AG04450 (cell line): ENCODE measurements at regions of chr19 and their contacts with region 1.

Region 1: DNA sequence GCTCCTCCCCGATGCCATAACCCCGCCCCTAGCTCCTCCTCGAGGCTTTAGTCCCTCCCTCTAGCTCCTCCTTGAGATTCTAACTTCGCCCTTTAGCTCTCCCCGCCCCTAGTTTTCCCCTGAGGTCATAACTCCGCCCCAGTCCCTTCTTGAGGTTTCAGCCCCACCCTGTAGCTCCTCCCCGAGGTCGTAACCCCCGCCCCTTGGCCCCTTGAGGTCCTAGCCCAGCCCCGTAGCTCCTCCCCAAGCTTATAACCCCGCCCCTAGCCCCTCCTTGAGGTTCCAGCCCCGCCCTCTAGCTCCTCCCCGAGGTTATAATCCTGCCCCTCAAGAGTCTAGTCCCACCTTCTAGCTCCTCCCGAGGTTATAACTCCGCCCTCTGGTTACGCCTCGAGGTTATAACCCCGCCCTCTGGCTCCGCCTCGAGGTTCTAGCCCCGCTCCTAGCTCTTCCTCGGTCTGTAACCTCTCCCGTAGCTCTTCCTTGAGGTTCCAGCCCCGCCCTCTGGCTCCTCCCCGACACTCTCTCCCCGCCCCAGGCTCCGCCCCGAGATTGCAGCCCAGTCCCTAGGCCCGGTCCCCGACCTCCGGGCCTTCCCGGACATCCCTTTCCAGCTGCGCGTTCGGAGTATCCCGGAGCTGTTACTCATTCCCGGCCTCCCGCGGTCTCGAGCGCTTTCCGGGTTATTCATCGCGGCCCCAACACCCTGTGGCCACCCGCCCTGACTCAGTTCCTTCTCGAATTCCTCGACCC is 1.4 kb downstream of the PLAUR start:
- DNase-seq: peak; percentile 100
- H3K4me3 ChIP-seq: peak overlapping the region; percentile 94
- H3K27ac ChIP-seq: peak overlapping the region; percentile 98
- H3K27me3 ChIP-seq: no peaks in the 10 kb centered on the region
- CTCF ChIP-seq: no peak

Region 2: DNA sequence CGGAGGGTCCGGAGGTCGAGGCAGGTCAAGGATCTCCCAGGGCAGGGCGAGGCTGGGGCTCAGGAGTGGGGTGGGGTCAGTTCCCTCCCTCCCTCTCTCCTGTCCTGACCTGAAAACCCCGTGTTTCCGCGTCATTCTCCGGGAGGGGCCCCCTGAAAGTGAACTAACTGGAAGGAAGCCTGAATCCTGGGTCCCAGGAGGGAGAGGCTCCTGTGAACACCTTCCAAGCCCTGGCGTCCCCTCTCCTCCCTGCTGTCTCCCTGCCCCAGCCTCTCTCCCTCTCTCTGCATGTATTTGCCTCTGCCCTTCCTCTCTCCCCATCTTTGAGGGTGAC is 28.2 kb before region 1 on chr19:
- CTCF ChIA-PET with region 1: no interaction called
- POLR2A ChIA-PET with region 1: no interaction called
- DNase-seq: no peak
- H3K4me3 ChIP-seq: peak overlapping the region; percentile 64
- H3K27ac ChIP-seq: no peak overlapping the region
- H3K27me3 ChIP-seq: peaks cover 24% of the 10 kb centered on the region
- CTCF ChIP-seq: no peak

Region 3: GRCh38 chr19:43651758-43652545 is 16.6 kb before region 1 on chr19:
- CTCF ChIA-PET with region 1: interaction called, 10 read pairs
- POLR2A ChIA-PET with region 1: no interaction called
- DNase-seq: peak; percentile 27
- H3K4me3 ChIP-seq: no peak overlapping the region
- H3K27ac ChIP-seq: no peak overlapping the region
- H3K27me3 ChIP-seq: no peaks in the 10 kb centered on the region
- CTCF ChIP-seq: peak; percentile 83

Region 4: GRCh38 chr19:43700395-43701000 is 31.9 kb after region 1 on chr19:
- CTCF ChIA-PET with region 1: interaction called, 4 read pairs
- POLR2A ChIA-PET with region 1: interaction called, 17 read pairs
- DNase-seq: peak; percentile 47
- H3K4me3 ChIP-seq: no peak overlapping the region
- H3K27ac ChIP-seq: peak overlapping the region; percentile 95
- H3K27me3 ChIP-seq: peaks cover 5% of the 10 kb centered on the region
- CTCF ChIP-seq: no peak

Region 5: DNA sequence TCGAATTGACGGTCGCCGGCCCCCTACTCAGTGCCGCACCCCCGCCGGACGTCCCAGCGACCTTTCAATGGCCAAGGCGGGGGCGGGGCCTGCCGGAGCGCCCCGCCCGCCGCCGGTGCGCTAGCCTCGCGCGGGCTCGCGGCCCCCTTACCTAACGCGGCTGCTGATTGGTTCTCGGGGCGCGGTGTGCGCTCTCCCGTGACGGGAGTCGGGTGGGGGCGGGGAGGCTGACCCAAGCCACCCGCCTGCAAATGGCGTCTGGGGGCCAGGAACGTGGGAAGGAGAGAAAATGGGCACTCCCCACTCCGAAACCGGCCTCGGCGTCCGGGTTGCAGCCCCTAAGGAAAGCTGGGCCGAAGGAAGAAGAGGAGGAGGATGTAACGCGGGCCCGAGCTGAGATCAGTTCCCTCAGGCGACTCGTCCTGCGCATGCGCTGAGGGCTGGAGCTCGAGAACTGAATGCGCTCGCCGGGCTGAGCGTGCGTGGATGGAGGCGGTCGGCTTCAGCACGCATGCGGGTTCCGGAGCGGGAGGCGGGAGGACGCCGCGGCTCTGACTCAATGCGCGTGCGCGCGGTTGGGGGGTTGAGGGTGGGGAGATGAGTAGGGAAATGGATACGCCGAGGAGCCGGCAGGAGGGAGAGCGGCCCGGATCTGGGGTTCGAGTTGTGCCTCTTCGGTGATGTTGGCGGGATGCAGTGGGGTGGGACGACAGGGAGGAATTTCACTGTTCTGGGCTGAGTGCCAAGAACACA is 86.1 kb after region 1 on chr19 and contains the start of gene SMG9:
- CTCF ChIA-PET with region 1: interaction called, 5 read pairs
- POLR2A ChIA-PET with region 1: interaction called, 13 read pairs
- DNase-seq: peak; percentile 94
- H3K4me3 ChIP-seq: peak within 1 kb of the TSS; percentile 88
- H3K27ac ChIP-seq: peak within 1 kb of the TSS; percentile 100
- H3K27me3 ChIP-seq: no peaks in the 10 kb centered on the region
- CTCF ChIP-seq: no peak
- polyA plus RNA-seq, gene SMG9: 9.2 and 12.1 TPM in 2 replicates

Region 6: DNA sequence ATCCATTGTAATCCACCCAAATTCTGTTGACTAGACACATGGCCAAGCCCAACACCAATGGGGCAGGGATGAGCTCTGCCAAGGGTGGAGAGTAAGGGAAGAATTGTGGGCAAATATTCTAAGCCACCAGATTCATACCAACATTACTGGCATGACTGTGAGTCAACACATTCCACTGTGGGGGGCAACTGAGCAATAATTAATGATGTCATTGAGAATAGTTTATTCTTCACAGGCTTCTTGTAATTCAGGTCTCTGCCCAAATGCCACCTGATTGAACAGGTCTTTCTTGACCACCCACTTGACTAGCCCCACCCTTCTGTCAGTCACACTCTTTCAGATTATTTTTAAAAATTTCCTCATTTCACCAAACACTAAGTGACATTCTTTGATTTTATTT is 187.0 kb after region 1 on chr19:
- CTCF ChIA-PET with region 1: no interaction called
- POLR2A ChIA-PET with region 1: no interaction called
- DNase-seq: no peak
- H3K4me3 ChIP-seq: no peak overlapping the region
- H3K27ac ChIP-seq: no peak overlapping the region
- H3K27me3 ChIP-seq: no peaks in the 10 kb centered on the region
- CTCF ChIP-seq: no peak